Activated naive CD4-positive, alpha-beta T cell treated with anti-CD3 and anti-CD28 coated beads for 36 hours (primary cell): ENCODE measurements at regions of chr17 and their contacts with region 1.

Region 1: GRCh38 chr17:32006957-32007462 is at the start of gene LRRC37B:
- DNase-seq: peak; percentile 91
- H3K4me3 Mint-ChIP-seq: peak within 1 kb of the TSS; percentile 83
- H3K27ac Mint-ChIP-seq: peak within 1 kb of the TSS; percentile 79
- H3K4me1 Mint-ChIP-seq: peaks cover 31% of the 10 kb centered on the region
- H3K27me3 Mint-ChIP-seq: no peaks in the 10 kb centered on the region
- total RNA-seq, gene LRRC37B: 14.4 to 15.0 TPM

Region 2: DNA sequence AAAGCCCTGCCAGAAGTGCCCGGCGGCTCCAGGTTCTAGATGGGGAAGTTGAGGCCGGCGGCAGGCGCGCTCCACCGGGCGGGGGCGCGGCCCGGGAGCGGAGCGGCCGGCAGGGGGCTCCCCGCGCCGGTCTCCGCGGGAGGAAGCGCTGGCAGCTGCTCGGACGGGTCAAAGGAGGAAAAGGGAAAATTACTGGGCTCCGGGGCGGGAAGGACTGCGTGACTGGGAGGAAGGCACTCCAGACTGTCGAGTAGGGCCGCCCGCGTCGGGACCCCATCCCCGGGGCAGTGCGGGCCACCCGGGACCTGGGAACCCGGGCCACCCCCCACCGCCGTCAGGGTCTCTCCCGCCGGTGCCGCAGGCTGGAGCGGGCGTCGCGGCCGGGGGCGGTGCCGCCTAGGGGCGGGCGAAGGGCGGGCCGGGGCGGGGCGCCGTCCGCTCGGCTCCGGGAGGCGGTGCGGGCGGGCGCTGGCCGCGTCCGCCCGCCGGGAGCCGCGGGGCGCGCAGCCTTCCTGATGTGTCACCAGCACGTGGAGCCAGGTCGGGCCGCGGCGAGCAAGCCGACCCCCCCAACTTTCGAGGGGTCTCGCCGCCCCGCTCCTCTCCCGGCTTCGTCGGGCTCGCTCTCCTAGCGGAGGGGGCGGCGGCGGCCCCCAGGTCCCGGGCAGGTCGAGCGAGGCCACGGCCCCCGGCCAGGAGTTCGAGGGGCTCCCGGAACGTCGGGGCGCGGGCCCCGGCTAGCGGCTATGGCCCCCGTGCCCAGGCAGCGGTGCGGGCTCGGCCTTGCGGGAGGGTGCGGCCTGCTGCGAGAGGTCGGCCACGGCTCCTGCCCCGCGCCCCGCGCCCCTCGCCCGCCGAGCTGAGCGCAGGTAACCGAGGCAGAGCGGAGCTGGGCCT is 448.0 kb before region 1 on chr17:
- CTCF ChIA-PET with region 1: no interaction called
- intact Hi-C with region 1: no loop called
- DNase-seq: peak; percentile 61
- H3K4me3 Mint-ChIP-seq: peak overlapping the region; percentile 48
- H3K27ac Mint-ChIP-seq: no peak overlapping the region
- H3K4me1 Mint-ChIP-seq: peaks cover 26% of the 10 kb centered on the region
- H3K27me3 Mint-ChIP-seq: no peaks in the 10 kb centered on the region

Region 3: DNA sequence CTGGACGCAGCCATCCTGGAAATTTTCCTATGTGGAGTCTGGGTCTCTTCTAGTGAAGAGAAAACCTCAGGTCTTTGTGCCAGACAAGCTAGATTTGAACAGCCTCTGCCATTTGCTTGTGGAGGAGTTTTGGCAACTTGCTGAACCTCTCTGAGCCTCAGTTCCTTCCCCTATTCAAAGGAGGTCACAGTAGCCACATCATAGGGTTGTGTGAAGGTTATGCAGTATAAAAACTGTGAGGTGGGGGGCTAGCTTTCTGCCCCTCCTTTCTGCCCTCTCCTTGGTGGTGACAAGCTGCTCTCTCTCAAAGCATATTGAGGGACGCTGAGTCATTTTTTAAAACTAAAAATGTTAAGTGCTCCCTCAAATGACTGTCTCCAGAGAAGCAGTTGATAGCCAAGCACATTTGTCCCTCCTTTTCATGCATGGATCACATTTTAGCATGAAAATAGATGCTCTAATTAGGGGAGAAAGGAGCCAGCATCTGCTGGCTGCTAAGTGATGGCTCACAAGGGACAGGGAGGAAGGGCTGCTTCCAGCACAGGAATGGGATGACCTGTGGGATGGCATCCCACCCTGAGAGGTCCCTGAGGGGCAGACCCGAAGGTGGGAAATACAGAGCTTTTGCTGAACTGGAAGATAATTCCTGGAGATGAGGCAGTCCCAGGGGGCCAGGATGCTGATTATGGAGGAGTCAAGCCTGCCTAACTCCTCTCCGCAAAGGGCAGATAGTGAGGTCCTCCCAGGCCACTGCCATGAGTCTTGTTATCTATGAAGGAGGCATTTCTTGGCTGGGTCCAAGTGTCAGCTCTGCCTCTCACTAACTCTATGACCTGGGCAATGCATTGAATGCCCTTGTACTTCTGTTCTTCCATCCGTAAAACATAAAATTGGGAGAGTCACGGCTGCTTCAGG is 396.8 kb before region 1 on chr17:
- CTCF ChIA-PET with region 1: interaction called, 10 read pairs
- intact Hi-C with region 1: no loop called
- DNase-seq: no peak
- H3K4me3 Mint-ChIP-seq: no peak overlapping the region
- H3K27ac Mint-ChIP-seq: no peak overlapping the region
- H3K4me1 Mint-ChIP-seq: no peaks in the 10 kb centered on the region
- H3K27me3 Mint-ChIP-seq: no peaks in the 10 kb centered on the region

Region 4: GRCh38 chr17:31931756-31932155 is 75.3 kb before region 1 on chr17:
- CTCF ChIA-PET with region 1: no interaction called
- intact Hi-C with region 1: loop called (anchors 10 kb)
- DNase-seq: no peak
- H3K4me3 Mint-ChIP-seq: no peak overlapping the region
- H3K27ac Mint-ChIP-seq: no peak overlapping the region
- H3K4me1 Mint-ChIP-seq: peaks cover 7% of the 10 kb centered on the region
- H3K27me3 Mint-ChIP-seq: no peaks in the 10 kb centered on the region

Region 5: GRCh38 chr17:32127158-32127897 is 120.3 kb after region 1 on chr17:
- CTCF ChIA-PET with region 1: interaction called, 6 read pairs
- intact Hi-C with region 1: loop called (anchors 1 kb)
- DNase-seq: peak; percentile 88
- H3K4me3 Mint-ChIP-seq: peak overlapping the region; percentile 83
- H3K27ac Mint-ChIP-seq: peak overlapping the region; percentile 91
- H3K4me1 Mint-ChIP-seq: peaks cover 17% of the 10 kb centered on the region
- H3K27me3 Mint-ChIP-seq: no peaks in the 10 kb centered on the region

Region 6: GRCh38 chr17:32349854-32350665 is 343.1 kb after region 1 on chr17 and contains the start of gene ZNF207:
- CTCF ChIA-PET with region 1: no interaction called
- intact Hi-C with region 1: loop called (anchors 10 kb)
- DNase-seq: peak; percentile 98
- H3K4me3 Mint-ChIP-seq: peak within 1 kb of the TSS; percentile 97
- H3K27ac Mint-ChIP-seq: peak within 1 kb of the TSS; percentile 99
- H3K4me1 Mint-ChIP-seq: peaks cover 40% of the 10 kb centered on the region
- H3K27me3 Mint-ChIP-seq: no peaks in the 10 kb centered on the region
- total RNA-seq, gene ZNF207: 213 to 230 TPM